Caco-2 (cell line): ENCODE measurements at regions of chr3 and their contacts with region 1.

Region 1: GRCh38 chr3:66083784-66084213 is 45.1 kb upstream of the MAGI1 start:
- DNase-seq: peak; percentile 72 to 78
- H3K4me3 ChIP-seq: no peak overlapping the region
- H3K4me3 Mint-ChIP-seq: no peak overlapping the region
- H3K27ac Mint-ChIP-seq: peak overlapping the region; percentile 53
- H3K4me1 ChIP-seq: peaks cover 21% of the 10 kb centered on the region
- H3K4me1 Mint-ChIP-seq: peaks cover 10% of the 10 kb centered on the region
- H3K27me3 ChIP-seq: no peaks in the 10 kb centered on the region
- H3K27me3 Mint-ChIP-seq: no peaks in the 10 kb centered on the region
- CTCF ChIP-seq: no peak

Region 2: DNA sequence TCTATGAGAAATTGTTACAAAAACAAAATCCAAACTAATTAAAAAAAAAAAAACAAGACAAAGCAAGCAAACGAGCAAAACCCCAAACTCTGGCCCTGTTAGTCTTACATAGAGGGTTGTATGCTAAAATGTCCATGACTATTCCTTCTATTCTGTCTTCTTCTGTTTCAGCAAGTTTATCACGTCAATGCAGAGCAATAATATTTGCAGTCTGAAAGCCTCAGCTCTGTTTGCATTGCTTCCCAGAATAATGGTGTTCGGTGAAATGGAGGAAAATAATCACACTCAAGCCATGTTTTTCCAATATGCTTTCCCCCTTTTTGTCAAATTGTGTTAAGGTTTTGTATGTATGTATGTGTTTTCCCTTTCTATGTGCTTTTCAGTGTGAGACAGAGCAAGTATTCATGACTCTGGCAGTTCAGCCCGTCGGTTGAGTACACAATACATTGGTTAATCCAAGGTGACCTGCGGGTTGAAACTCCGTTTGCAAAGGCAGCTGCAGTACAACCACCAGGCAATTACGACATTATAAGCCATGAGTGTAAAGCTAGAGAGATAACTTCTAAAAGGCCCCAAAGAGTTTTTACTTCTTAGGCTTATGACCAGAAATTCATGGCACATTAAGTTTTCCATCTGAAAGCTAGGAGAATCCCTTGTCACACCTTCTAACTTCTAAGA is 10.2 kb before region 1 on chr3:
- CTCF ChIA-PET with region 1: no interaction called
- POLR2A ChIA-PET with region 1: no interaction called
- intact Hi-C with region 1: loop called (anchors 1 kb)
- DNase-seq: peak; percentile 59 to 62
- H3K4me3 ChIP-seq: no peak overlapping the region
- H3K4me3 Mint-ChIP-seq: peak overlapping the region; percentile 68
- H3K27ac Mint-ChIP-seq: peak overlapping the region; percentile 60
- H3K4me1 ChIP-seq: peaks cover 14% of the 10 kb centered on the region
- H3K4me1 Mint-ChIP-seq: peaks cover 9% of the 10 kb centered on the region
- H3K27me3 ChIP-seq: no peaks in the 10 kb centered on the region; the same call in 1 of the 2 replicates
- H3K27me3 Mint-ChIP-seq: no peaks in the 10 kb centered on the region
- CTCF ChIP-seq: no peak

Region 3: GRCh38 chr3:66115858-66116654 is 32.3 kb after region 1 on chr3:
- CTCF ChIA-PET with region 1: no interaction called
- POLR2A ChIA-PET with region 1: no interaction called
- intact Hi-C with region 1: loop called (anchors 5 kb)
- DNase-seq: peak; percentile 75 to 84
- H3K4me3 ChIP-seq: no peak overlapping the region
- H3K4me3 Mint-ChIP-seq: peak overlapping the region; percentile 50
- H3K27ac Mint-ChIP-seq: peak overlapping the region; percentile 86
- H3K4me1 ChIP-seq: peaks cover 23% of the 10 kb centered on the region
- H3K4me1 Mint-ChIP-seq: peaks cover 23% of the 10 kb centered on the region
- H3K27me3 ChIP-seq: no peaks in the 10 kb centered on the region
- H3K27me3 Mint-ChIP-seq: no peaks in the 10 kb centered on the region
- CTCF ChIP-seq: no peak

Region 4: DNA sequence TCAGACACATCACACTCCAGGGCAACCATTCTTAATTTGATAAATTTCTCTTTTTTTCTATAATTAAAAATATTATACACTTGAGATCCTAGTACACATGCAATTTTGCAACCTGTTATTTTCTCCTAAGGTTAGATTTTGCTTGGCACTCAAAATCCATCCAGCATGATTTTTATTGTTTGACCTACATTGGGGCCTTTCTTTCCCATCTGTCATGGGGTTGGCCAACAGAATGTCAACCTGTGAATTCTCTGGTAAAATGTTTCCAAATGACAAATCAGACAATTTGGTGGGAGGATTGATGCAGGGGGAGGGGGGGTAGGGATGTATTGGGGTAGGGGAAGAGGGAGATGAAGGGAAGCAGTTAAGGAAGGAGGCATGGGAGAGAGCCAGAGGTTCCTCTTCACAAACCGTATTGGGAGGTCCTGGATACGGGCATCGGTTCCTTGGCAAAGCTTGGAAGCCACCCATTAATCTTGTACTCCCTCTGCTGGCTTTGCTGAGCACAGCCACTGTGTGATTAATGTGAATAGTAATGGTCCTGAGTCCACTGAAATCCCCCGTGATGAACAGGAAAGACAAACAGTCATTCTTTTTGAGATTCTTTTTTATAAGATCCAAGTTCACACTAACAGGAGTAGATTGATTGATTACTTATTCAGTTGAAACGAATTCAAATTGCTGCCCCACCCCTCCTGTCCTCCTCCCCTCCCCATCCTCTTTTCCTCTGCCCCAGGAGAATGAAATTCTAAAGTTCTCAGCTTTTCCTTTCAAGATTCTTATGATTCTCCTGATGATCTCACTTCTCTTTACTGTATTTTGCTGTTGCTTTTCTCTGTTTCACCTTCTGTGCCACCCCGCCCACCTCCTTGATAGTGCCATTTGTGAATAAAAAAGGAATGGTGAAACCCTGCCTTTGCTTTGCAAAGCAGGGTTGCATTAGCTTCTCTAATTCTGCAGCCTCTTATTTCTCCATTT is 54.8 kb after region 1 on chr3:
- CTCF ChIA-PET with region 1: no interaction called
- POLR2A ChIA-PET with region 1: no interaction called
- intact Hi-C with region 1: loop called (anchors 2 kb)
- DNase-seq: peak; percentile 55 to 69
- H3K4me3 ChIP-seq: no peak overlapping the region
- H3K4me3 Mint-ChIP-seq: no peak overlapping the region
- H3K27ac Mint-ChIP-seq: no peak overlapping the region
- H3K4me1 ChIP-seq: peaks cover 9% of the 10 kb centered on the region
- H3K4me1 Mint-ChIP-seq: peaks cover 15% of the 10 kb centered on the region
- H3K27me3 ChIP-seq: no peaks in the 10 kb centered on the region
- H3K27me3 Mint-ChIP-seq: no peaks in the 10 kb centered on the region
- CTCF ChIP-seq: peak; percentile 56 to 70

Region 5: DNA sequence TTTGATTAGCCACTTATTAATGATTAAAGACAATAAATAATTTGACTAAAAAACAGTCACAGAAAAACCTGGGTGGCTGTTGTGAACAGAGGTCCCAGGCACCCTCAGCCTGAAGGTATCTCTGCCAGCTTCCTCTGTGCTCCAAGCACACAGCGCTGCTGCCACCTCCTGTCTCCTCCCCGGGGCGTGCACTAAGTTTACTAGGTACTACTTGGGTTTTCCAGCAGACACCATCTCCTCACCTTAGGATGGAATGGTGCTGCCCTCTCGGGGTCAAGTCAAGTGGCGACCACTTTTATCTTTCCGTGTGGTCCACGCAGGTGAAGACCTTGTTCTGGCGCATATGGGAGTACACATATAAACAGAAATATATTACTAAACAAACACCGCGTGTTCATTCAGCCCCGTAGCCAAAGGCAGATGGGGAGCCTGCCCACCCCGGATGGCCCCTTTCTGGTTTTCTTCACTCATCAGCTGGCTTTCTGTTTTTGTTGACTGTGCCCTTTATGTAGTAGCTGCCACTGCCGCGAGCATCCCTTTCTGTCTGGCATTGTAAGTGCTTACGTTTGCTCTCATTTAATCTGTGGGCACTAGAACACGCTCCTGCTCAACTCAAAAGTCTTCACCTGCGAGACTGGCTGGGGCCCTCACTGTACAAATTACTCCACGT is 289.0 kb after region 1 on chr3:
- CTCF ChIA-PET with region 1: no interaction called
- POLR2A ChIA-PET with region 1: no interaction called
- intact Hi-C with region 1: no loop called
- DNase-seq: peak; percentile 73 to 74
- H3K4me3 ChIP-seq: no peak overlapping the region
- H3K4me3 Mint-ChIP-seq: no peak overlapping the region
- H3K27ac Mint-ChIP-seq: no peak overlapping the region
- H3K4me1 ChIP-seq: peaks cover 12% of the 10 kb centered on the region
- H3K4me1 Mint-ChIP-seq: peaks cover 12% of the 10 kb centered on the region
- H3K27me3 ChIP-seq: no peaks in the 10 kb centered on the region
- H3K27me3 Mint-ChIP-seq: no peaks in the 10 kb centered on the region
- CTCF ChIP-seq: peak; percentile 50 to 64